ENCODE measurements at regions of chr7 and their contacts with region 1.

Region 1: DNA sequence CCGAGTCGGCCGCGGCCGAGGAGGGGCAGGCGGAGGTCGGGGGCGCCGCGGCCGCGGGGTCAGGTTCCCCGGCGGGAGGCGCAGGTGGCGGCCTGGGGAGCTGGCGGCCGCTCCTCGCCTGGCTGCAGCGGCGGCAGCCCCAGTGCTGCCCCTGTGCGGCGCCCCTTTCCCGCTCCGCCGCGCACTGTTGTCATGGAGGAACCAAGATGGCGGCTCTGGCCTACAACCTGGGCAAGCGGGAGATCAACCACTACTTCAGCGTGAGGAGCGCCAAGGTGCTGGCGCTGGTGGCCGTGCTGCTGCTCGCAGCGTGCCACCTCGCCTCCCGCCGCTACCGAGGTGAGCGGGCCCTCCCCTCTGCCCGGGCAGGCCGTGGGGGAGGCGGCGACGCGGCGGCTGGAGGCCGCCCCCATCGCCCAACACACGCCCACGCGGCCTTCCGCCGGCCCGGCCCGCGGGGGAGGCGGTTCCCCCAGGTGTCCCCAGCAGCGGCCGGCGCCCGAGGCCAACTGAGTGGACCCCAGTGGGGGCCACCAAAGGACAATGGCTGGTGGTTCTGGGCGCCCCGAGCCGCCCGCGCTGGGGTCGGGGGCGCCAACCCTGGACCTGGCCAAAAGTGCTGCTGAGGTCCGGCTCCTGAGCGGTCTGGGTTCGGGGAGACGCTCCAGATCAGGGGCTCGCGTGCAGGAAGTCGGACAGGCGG is 421 bp downstream of the CASD1 start:
- DNase-seq: peak; percentile 73
- ATAC-seq: peak; percentile 80
- H3K4me3 Mint-ChIP-seq: peak overlapping the region; percentile 87
- H3K27ac Mint-ChIP-seq: peak overlapping the region; percentile 88
- H3K4me1 Mint-ChIP-seq: peaks cover 46% of the 10 kb centered on the region
- H3K27me3 Mint-ChIP-seq: no peaks in the 10 kb centered on the region
- CTCF ChIP-seq: no peak

Region 2: DNA sequence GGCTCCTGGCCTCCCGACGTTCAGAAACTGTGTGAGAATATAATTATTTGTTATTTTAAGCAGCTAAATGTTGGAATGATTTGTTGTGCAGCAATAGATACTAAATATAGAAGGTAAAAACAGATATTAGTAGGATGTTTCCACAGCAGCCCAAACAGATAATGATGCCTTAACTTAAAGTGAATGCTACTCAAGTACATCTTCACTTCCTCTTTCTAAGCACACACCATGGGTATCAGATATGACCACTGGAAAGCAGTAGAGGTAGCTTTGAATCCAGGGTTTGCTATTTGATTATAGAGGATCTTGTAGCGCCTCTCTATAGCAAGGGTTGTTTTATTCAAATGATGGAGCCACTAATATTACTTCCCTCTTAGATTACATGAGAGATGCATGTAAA is 467.6 kb before region 1 on chr7:
- CTCF ChIA-PET with region 1: no interaction called
- POLR2A ChIA-PET with region 1: no interaction called
- intact Hi-C with region 1: loop called (anchors 10 kb)
- DNase-seq: no peak
- ATAC-seq: peak; percentile 80
- H3K4me3 Mint-ChIP-seq: no peak overlapping the region
- H3K27ac Mint-ChIP-seq: no peak overlapping the region
- H3K4me1 Mint-ChIP-seq: peaks cover 60% of the 10 kb centered on the region
- H3K27me3 Mint-ChIP-seq: no peaks in the 10 kb centered on the region
- CTCF ChIP-seq: no peak

Region 3: DNA sequence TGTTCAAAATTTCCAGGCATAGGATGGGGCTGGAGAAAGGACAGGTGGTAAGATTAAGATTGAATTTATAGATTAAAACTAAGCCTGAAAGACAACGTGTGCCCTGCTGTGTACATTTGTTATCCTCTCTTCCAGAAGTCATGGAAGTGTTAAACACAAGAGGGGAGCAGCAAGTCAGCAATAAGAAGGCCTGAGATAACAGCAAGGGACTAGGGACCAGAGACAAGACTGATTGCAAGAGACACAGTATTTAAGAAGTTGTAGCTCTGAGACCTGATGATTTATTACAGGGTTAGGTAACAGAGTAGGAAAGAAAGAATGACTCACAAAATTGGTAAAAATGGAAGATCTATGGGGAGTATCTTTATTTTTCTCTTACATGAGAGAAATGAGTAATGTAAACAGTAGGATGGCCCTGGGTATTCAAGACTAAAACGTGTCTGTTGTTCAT is 171.1 kb before region 1 on chr7:
- CTCF ChIA-PET with region 1: no interaction called
- POLR2A ChIA-PET with region 1: no interaction called
- intact Hi-C with region 1: no loop called
- DNase-seq: no peak
- ATAC-seq: no peak
- H3K4me3 Mint-ChIP-seq: no peak overlapping the region
- H3K27ac Mint-ChIP-seq: no peak overlapping the region
- H3K4me1 Mint-ChIP-seq: no peaks in the 10 kb centered on the region
- H3K27me3 Mint-ChIP-seq: peaks cover 2% of the 10 kb centered on the region
- CTCF ChIP-seq: no peak

Region 4: GRCh38 chr7:94532676-94533075 is 22.6 kb after region 1 on chr7:
- CTCF ChIA-PET with region 1: no interaction called
- POLR2A ChIA-PET with region 1: no interaction called
- intact Hi-C with region 1: loop called (anchors 2 kb)
- DNase-seq: no peak
- ATAC-seq: no peak
- H3K4me3 Mint-ChIP-seq: no peak overlapping the region
- H3K27ac Mint-ChIP-seq: no peak overlapping the region
- H3K4me1 Mint-ChIP-seq: no peaks in the 10 kb centered on the region
- H3K27me3 Mint-ChIP-seq: no peaks in the 10 kb centered on the region
- CTCF ChIP-seq: no peak

Region 5: GRCh38 chr7:94620703-94621118 is 110.7 kb after region 1 on chr7:
- CTCF ChIA-PET with region 1: no interaction called
- POLR2A ChIA-PET with region 1: no interaction called
- intact Hi-C with region 1: loop called (anchors 1 kb)
- DNase-seq: peak; percentile 23
- ATAC-seq: peak; percentile 98
- H3K4me3 Mint-ChIP-seq: no peak overlapping the region
- H3K27ac Mint-ChIP-seq: peak overlapping the region; percentile 68
- H3K4me1 Mint-ChIP-seq: peaks cover 11% of the 10 kb centered on the region
- H3K27me3 Mint-ChIP-seq: no peaks in the 10 kb centered on the region
- CTCF ChIP-seq: no peak

Region 6: DNA sequence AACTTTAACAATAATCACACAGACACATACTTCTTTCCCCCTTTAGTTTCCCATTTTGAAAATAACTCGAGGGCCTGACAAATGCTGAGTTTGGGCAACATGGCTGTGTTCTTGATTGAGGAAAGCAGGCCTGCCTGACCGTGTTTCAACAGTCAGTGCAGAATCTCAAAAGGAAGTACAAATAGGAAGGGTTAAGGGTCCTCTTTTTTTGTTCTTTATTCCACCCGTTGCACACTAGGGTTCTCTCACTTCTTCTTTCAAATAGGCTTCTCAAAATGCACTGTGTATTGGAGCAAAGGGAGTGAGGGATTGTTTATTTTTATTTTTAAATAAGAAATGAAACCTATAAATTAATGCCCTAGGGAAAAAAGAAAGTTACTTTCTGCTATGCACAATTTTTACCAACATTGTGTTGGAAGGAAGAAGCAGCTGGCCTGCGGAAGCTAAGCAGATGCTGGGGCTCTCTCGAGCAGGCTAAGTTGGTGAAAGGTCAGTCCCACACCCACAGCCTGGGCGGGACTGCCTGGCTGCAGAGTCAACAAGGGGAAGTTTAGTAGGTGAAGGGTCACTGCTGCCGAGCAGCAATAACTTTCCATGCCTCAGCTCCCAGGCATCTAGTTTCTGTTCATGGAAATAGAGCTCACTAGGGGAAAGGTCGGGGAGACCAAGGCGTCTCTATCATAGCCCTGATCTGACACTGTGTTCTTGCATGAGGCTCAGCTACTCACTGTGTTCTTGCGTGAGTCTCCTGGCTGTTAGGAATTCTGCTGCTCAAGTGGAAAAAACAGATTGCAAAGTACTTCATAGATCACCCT is 1098.5 kb after region 1 on chr7:
- CTCF ChIA-PET with region 1: no interaction called
- POLR2A ChIA-PET with region 1: no interaction called
- intact Hi-C with region 1: loop called (anchors 5 kb)
- DNase-seq: peak; percentile 49
- ATAC-seq: peak; percentile 89
- H3K4me3 Mint-ChIP-seq: peak overlapping the region; percentile 81
- H3K27ac Mint-ChIP-seq: peak overlapping the region; percentile 91
- H3K4me1 Mint-ChIP-seq: peaks cover 67% of the 10 kb centered on the region
- H3K27me3 Mint-ChIP-seq: no peaks in the 10 kb centered on the region
- CTCF ChIP-seq: no peak

Measured in activated B cell treated with CpG ODN at 0.5 μM for 24 hours (primary cell).